ENCODE measurements at regions of chr2 and their contacts with region 1.

Region 1: GRCh38 chr2:179595284-179595683 is 266.1 kb downstream of the ZNF385B start:
- DNase-seq: no peak
- H3K4me3 ChIP-seq: no peak overlapping the region
- H3K4me3 Mint-ChIP-seq: no peak overlapping the region
- H3K27ac ChIP-seq: no peak overlapping the region
- H3K27ac Mint-ChIP-seq: no peak overlapping the region
- H3K4me1 ChIP-seq: no peaks in the 10 kb centered on the region
- H3K4me1 Mint-ChIP-seq: no peaks in the 10 kb centered on the region
- H3K27me3 ChIP-seq: no peaks in the 10 kb centered on the region
- H3K27me3 Mint-ChIP-seq: no peaks in the 10 kb centered on the region

Region 2: DNA sequence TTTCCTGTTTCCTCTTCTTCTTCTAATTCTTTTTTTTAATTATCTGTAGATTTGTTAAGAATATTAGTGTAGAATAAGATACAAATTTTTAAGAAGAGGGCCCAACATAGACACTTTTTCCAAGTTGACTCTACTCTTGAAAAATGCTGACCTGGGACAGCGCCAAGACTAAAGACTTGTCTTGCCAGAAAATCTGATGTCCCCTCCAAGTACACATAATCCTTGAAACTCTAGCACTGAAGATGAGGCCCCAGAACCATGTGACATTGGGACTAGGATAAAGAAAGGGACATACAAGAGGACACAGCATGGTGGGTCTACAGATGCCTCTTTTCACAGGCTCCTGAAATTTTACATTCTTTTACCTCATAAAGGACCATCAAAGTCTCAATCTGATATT is 59.1 kb before region 1 on chr2:
- CTCF ChIA-PET with region 1: no interaction called
- POLR2A ChIA-PET with region 1: no interaction called
- intact Hi-C with region 1: no loop called
- DNase-seq: no peak
- H3K4me3 ChIP-seq: no peak overlapping the region
- H3K4me3 Mint-ChIP-seq: no peak overlapping the region
- H3K27ac ChIP-seq: no peak overlapping the region
- H3K27ac Mint-ChIP-seq: no peak overlapping the region
- H3K4me1 ChIP-seq: no peaks in the 10 kb centered on the region
- H3K4me1 Mint-ChIP-seq: no peaks in the 10 kb centered on the region
- H3K27me3 ChIP-seq: no peaks in the 10 kb centered on the region
- H3K27me3 Mint-ChIP-seq: no peaks in the 10 kb centered on the region

Region 3: GRCh38 chr2:179655627-179656026 is 60.3 kb after region 1 on chr2:
- CTCF ChIA-PET with region 1: no interaction called
- POLR2A ChIA-PET with region 1: no interaction called
- intact Hi-C with region 1: loop called (anchors 2 kb)
- DNase-seq: no peak
- H3K4me3 ChIP-seq: no peak overlapping the region
- H3K4me3 Mint-ChIP-seq: no peak overlapping the region
- H3K27ac ChIP-seq: no peak overlapping the region
- H3K27ac Mint-ChIP-seq: no peak overlapping the region
- H3K4me1 ChIP-seq: no peaks in the 10 kb centered on the region
- H3K4me1 Mint-ChIP-seq: no peaks in the 10 kb centered on the region
- H3K27me3 ChIP-seq: no peaks in the 10 kb centered on the region
- H3K27me3 Mint-ChIP-seq: peaks cover 0 to 1% of the 10 kb centered on the region in 2 donors